Endothelial cell of umbilical vein (primary cell): ENCODE measurements at regions of chr7 and their contacts with region 1.

Region 1: DNA sequence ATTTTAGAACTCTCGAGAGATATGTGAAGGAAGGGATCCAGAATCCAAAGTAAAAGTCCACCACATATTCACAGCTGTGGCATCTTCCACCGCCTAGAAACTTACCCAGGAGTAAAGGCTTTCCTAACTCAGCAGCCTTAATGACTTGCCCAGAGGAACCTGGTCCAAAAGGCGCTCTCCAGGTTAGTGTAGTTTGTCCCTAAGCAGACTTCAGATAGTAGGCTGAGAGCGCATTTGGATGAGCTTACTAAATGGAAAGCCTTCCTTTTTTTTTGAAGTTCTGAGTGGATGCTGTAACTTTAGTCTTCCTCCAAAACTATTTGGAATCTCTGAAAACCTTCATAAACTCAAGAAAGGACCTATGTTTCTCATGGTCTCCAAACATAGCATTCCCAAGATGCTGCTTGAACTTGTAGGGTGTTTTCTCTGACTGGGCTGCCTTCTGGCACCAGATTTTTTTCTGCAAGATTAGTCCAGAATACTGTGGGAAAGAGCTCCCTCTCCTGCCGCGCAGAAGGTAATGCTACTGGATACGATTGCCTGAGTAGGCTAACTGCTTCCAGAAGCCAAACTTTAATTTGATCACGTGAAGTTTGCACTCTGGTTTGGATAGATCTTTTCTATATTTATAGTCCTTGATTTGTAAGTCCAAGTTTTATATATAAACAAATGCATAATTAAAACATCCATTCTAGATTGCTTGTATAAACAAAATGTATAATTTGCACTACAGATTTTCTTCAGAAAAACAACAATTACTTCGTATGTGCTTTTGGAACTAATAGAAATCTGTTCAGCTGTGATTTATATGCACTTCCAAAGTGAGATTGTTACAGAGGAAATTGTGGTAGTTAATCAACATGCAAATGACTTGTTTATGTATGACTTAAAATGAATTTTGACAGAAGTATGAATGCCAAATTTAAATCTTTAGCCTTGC is 19.6 kb upstream of the GPR37 start:
- DNase-seq: peak; percentile 76
- H3K4me3 ChIP-seq: no peak overlapping the region
- H3K27ac ChIP-seq: no peak overlapping the region
- H3K4me1 ChIP-seq: peaks cover 14% of the 10 kb centered on the region
- H3K27me3 ChIP-seq: peaks cover 0 to 4% of the 10 kb centered on the region in 2 experiments
- CTCF ChIP-seq: peak; percentile 77 to 84
- POLR2A ChIP-seq: no peak

Region 2: GRCh38 chr7:123797673-123798527 is 987.2 kb before region 1 on chr7:
- CTCF ChIA-PET with region 1: interaction called, 8 read pairs
- POLR2A ChIA-PET with region 1: no interaction called
- dilution Hi-C with region 1: no loop called
- intact Hi-C with region 1: loop called (anchors 5 kb)
- DNase-seq: peak; percentile 82
- H3K4me3 ChIP-seq: no peak overlapping the region
- H3K27ac ChIP-seq: no peak overlapping the region
- H3K4me1 ChIP-seq: peaks cover 7% of the 10 kb centered on the region
- H3K27me3 ChIP-seq: no peaks in the 10 kb centered on the region
- CTCF ChIP-seq: peak in 1 of 2 donors; percentile 31
- POLR2A ChIP-seq: no peak

Region 3: GRCh38 chr7:123966936-123967335 is 818.2 kb before region 1 on chr7:
- CTCF ChIA-PET with region 1: interaction called, 16 read pairs
- POLR2A ChIA-PET with region 1: no interaction called
- dilution Hi-C with region 1: no loop called
- intact Hi-C with region 1: no loop called
- DNase-seq: peak; percentile 3
- H3K4me3 ChIP-seq: no peak overlapping the region
- H3K27ac ChIP-seq: no peak overlapping the region
- H3K4me1 ChIP-seq: no peaks in the 10 kb centered on the region
- H3K27me3 ChIP-seq: no peaks in the 10 kb centered on the region
- CTCF ChIP-seq: no peak
- POLR2A ChIP-seq: no peak

Region 4: GRCh38 chr7:124085179-124085578 is 700.0 kb before region 1 on chr7:
- CTCF ChIA-PET with region 1: interaction called, 3 read pairs
- POLR2A ChIA-PET with region 1: no interaction called
- dilution Hi-C with region 1: no loop called
- intact Hi-C with region 1: loop called (anchors 5 kb)
- DNase-seq: peak; percentile 99
- H3K4me3 ChIP-seq: no peak overlapping the region
- H3K27ac ChIP-seq: peak overlapping the region; percentile 38
- H3K4me1 ChIP-seq: peaks cover 23% of the 10 kb centered on the region
- H3K27me3 ChIP-seq: no peaks in the 10 kb centered on the region
- CTCF ChIP-seq: no peak
- POLR2A ChIP-seq: no peak

Region 5: GRCh38 chr7:124113045-124113444 is 672.1 kb before region 1 on chr7:
- CTCF ChIA-PET with region 1: interaction called, 10 read pairs
- POLR2A ChIA-PET with region 1: no interaction called
- dilution Hi-C with region 1: no loop called
- intact Hi-C with region 1: no loop called
- DNase-seq: no peak
- H3K4me3 ChIP-seq: no peak overlapping the region
- H3K27ac ChIP-seq: no peak overlapping the region
- H3K4me1 ChIP-seq: no peaks in the 10 kb centered on the region
- H3K27me3 ChIP-seq: peaks cover 0 to 7% of the 10 kb centered on the region in 2 experiments
- CTCF ChIP-seq: no peak
- POLR2A ChIP-seq: no peak

Region 6: DNA sequence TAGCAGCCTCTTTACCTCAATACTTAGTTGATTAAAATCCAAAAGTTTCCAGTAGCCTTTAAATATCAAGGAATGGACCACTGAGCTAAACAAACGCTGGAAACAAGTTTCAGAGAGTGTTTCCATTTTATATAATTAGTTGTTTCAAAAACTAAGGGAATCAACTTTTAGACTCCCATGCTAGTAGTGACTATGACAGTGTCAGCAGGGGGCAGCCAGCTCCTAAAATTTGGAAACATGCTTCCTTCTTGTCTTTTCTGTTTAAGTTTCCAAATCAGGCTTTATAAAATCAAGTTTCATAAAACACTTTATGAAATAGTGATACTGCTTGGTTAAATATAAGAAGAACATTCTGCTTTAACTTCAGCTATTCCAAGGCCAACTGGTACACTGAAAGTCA is 614.1 kb before region 1 on chr7:
- CTCF ChIA-PET with region 1: interaction called, 12 read pairs
- POLR2A ChIA-PET with region 1: no interaction called
- dilution Hi-C with region 1: no loop called
- intact Hi-C with region 1: no loop called
- DNase-seq: no peak
- H3K4me3 ChIP-seq: no peak overlapping the region
- H3K27ac ChIP-seq: no peak overlapping the region
- H3K4me1 ChIP-seq: no peaks in the 10 kb centered on the region
- H3K27me3 ChIP-seq: peaks cover 0 to 3% of the 10 kb centered on the region in 2 experiments
- CTCF ChIP-seq: no peak
- POLR2A ChIP-seq: no peak

Region 7: GRCh38 chr7:124840435-124840834 is 55.3 kb after region 1 on chr7:
- CTCF ChIA-PET with region 1: interaction called, 4 read pairs
- POLR2A ChIA-PET with region 1: no interaction called
- dilution Hi-C with region 1: no loop called
- intact Hi-C with region 1: loop called (anchors 5 kb)
- DNase-seq: peak; percentile 74
- H3K4me3 ChIP-seq: no peak overlapping the region
- H3K27ac ChIP-seq: no peak overlapping the region
- H3K4me1 ChIP-seq: peaks cover 17% of the 10 kb centered on the region
- H3K27me3 ChIP-seq: no peaks in the 10 kb centered on the region
- CTCF ChIP-seq: peak in 1 of 2 donors; percentile 5
- POLR2A ChIP-seq: no peak